ENCODE measurements at regions of chr1 and their contacts with region 1.

Region 1: GRCh38 chr1:12692967-12693782 is 22.7 kb upstream of the AADACL3 start:
- DNase-seq: no peak
- H3K4me3 ChIP-seq: no peak overlapping the region
- H3K27ac ChIP-seq: no peak overlapping the region
- H3K4me1 ChIP-seq: no peaks in the 10 kb centered on the region
- H3K27me3 ChIP-seq: no peaks in the 10 kb centered on the region
- CTCF ChIP-seq: no peak
- EP300 ChIP-seq: no peak
- POLR2A ChIP-seq: no peak

Region 2: GRCh38 chr1:12549460-12550349 is 143.5 kb before region 1 on chr1:
- in situ Hi-C with region 1: no loop called
- intact Hi-C with region 1: no loop called
- DNase-seq: peak; percentile 73
- H3K4me3 ChIP-seq: no peak overlapping the region
- H3K27ac ChIP-seq: peak overlapping the region; percentile 70 to 85 (median 79)
- H3K4me1 ChIP-seq: peaks cover 13 to 28% (median 18%) of the 10 kb centered on the region in 4 donors
- H3K27me3 ChIP-seq: no peaks in the 10 kb centered on the region
- CTCF ChIP-seq: no peak
- EP300 ChIP-seq: no peak
- POLR2A ChIP-seq: no peak

Region 3: DNA sequence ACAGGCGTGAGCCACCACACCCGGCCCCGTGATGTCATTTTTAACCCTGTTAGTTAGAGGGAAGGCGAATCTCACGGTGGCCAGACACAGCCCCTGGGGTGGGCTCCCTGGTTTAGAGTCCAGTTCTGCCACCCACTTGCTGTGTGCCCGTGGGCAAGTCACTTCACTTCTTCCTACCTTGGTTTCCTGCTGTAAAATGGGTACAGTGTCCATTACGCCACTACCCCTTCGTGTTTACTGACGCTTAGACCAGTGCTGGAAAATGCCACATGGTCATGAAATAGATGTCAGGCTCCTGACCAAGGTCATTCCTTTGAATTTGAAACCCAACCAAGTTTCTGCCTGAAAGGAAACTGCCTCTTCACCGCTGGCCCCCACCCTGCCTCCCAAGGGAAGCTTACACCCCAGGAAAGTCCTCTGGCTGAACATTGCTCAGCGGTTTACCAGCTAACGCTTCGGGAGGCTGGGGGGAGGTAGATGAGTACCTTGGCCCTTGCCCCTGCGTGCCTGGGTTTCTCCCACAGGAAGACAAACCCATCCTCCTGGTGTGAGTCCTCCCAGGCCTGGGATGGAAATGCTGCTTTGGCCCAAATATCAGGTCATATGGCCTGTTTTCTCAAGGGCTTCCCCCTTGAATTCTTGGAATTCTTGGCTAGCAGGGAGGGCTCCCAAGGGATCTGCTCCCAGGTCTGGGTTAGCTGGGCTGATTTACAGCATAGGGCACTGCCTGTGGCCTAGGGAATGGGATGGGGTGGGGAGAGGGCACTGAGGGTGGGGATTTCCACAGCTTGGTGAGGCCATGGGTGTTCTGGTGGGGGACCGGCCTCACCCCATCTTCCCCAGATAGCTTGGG is 56.9 kb before region 1 on chr1:
- in situ Hi-C with region 1: loop called in 1 of 4 experiments (anchors 10 kb)
- intact Hi-C with region 1: no loop called
- DNase-seq: no peak
- H3K4me3 ChIP-seq: no peak overlapping the region
- H3K27ac ChIP-seq: no peak overlapping the region
- H3K4me1 ChIP-seq: no peaks in the 10 kb centered on the region
- H3K27me3 ChIP-seq: no peaks in the 10 kb centered on the region
- CTCF ChIP-seq: no peak
- EP300 ChIP-seq: no peak
- POLR2A ChIP-seq: no peak

Region 4: DNA sequence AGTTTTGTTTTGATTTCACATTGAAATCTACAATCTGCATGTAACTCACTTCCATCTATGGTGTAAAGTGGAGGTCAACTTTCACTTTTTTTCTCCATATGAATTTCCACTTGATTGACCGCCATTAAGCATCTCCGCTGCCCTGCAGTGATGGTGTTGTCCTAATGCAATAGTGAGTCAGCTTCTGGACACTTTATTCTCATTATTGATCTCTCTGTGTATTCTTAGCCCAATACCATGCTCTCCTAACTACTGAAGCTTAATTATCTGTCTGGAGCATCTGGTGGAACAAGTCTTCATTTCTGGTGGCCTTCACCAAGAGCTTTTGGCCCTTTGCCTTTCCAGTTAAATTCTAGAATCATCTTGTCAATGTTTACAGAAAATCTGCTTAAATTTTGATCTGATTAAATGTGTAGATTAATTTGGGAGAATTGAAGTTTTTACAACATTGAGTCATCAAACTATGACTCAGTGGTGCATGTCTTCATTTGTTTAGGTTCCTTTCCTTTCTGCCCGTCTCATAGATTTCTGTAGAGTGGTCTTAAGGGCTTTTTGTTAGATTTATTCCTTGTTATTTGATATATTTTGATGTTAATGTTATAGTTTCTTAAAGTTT is 1188.3 kb after region 1 on chr1:
- in situ Hi-C with region 1: no loop called
- intact Hi-C with region 1: no loop called
- DNase-seq: no peak
- H3K4me3 ChIP-seq: no peak overlapping the region
- H3K27ac ChIP-seq: no peak overlapping the region
- H3K4me1 ChIP-seq: no peaks in the 10 kb centered on the region
- H3K27me3 ChIP-seq: no peaks in the 10 kb centered on the region
- CTCF ChIP-seq: no peak
- EP300 ChIP-seq: no peak
- POLR2A ChIP-seq: no peak